ENCODE measurements at regions of chr17 and their contacts with region 1.

Region 1: GRCh38 chr17:1628856-1629646 is 417 bp upstream of the SLC43A2 start:
- DNase-seq: peak; percentile 81
- H3K4me3 Mint-ChIP-seq: peak overlapping the region; percentile 85
- H3K27ac Mint-ChIP-seq: peak overlapping the region; percentile 85
- H3K4me1 Mint-ChIP-seq: no peaks in the 10 kb centered on the region
- H3K27me3 Mint-ChIP-seq: peaks cover 41% of the 10 kb centered on the region
- CTCF ChIP-seq: no peak

Region 2: GRCh38 chr17:1304962-1305563 is 324.0 kb before region 1 on chr17:
- CTCF ChIA-PET with region 1: no interaction called
- intact Hi-C with region 1: no loop called
- DNase-seq: no peak
- H3K4me3 Mint-ChIP-seq: no peak overlapping the region
- H3K27ac Mint-ChIP-seq: no peak overlapping the region
- H3K4me1 Mint-ChIP-seq: no peaks in the 10 kb centered on the region
- H3K27me3 Mint-ChIP-seq: peaks cover 50% of the 10 kb centered on the region
- CTCF ChIP-seq: no peak

Region 3: GRCh38 chr17:1616125-1616524 is 12.9 kb before region 1 on chr17:
- CTCF ChIA-PET with region 1: interaction called, 10 read pairs
- intact Hi-C with region 1: no loop called
- DNase-seq: no peak
- H3K4me3 Mint-ChIP-seq: no peak overlapping the region
- H3K27ac Mint-ChIP-seq: no peak overlapping the region
- H3K4me1 Mint-ChIP-seq: peaks cover 8% of the 10 kb centered on the region
- H3K27me3 Mint-ChIP-seq: no peaks in the 10 kb centered on the region
- CTCF ChIP-seq: no peak

Region 4: GRCh38 chr17:1684378-1685189 is 55.5 kb after region 1 on chr17 and contains the start of gene PRPF8:
- CTCF ChIA-PET with region 1: no interaction called
- intact Hi-C with region 1: no loop called
- DNase-seq: peak; percentile 94
- H3K4me3 Mint-ChIP-seq: peak within 1 kb of the TSS; percentile 92
- H3K27ac Mint-ChIP-seq: peak within 1 kb of the TSS; percentile 87
- H3K4me1 Mint-ChIP-seq: peaks cover 19% of the 10 kb centered on the region
- H3K27me3 Mint-ChIP-seq: no peaks in the 10 kb centered on the region
- CTCF ChIP-seq: no peak
- total RNA-seq, gene PRPF8: 182 and 206 TPM in 2 replicates

Measured in Calu3 (cell line).